ENCODE measurements at regions of chr5 and their contacts with region 1.

Region 1: GRCh38 chr5:137743031-137743640 is 7.2 kb upstream of the KLHL3 start:
- DNase-seq: no peak
- H3K4me3 ChIP-seq: no peak overlapping the region
- H3K27me3 ChIP-seq: no peaks in the 10 kb centered on the region
- CTCF ChIP-seq: peak; percentile 67

Region 2: GRCh38 chr5:137619191-137619870 is 123.8 kb before region 1 on chr5:
- CTCF ChIA-PET with region 1: interaction called, 13 read pairs
- POLR2A ChIA-PET with region 1: interaction called, 7 read pairs
- DNase-seq: peak; percentile 78
- H3K4me3 ChIP-seq: no peak overlapping the region
- H3K27me3 ChIP-seq: no peaks in the 10 kb centered on the region
- CTCF ChIP-seq: no peak

Region 3: GRCh38 chr5:137635521-137635921 is 107.6 kb before region 1 on chr5:
- CTCF ChIA-PET with region 1: interaction called, 141 read pairs
- POLR2A ChIA-PET with region 1: no interaction called
- DNase-seq: no peak
- H3K4me3 ChIP-seq: no peak overlapping the region
- H3K27me3 ChIP-seq: no peaks in the 10 kb centered on the region
- CTCF ChIP-seq: no peak

Region 4: DNA sequence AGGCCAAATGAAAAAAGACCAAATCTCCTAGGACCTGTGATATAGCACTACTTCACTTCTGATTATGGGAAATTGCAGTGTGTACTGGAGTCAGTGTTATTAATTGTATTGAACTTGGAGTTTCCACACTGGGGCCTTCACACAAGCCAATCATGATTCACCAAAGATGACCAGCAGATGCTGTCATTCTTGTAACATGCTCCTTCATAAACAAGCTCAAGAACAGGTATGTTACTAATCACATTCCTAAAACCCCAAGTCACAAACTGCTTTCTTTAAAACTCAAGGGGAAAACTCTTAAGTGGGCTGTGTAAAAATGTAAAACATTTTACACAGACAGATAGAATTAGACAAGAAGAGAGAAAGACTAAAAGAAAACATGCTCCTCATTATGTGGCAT is 12.8 kb before region 1 on chr5:
- CTCF ChIA-PET with region 1: interaction called, 10 read pairs
- POLR2A ChIA-PET with region 1: no interaction called
- DNase-seq: no peak
- H3K4me3 ChIP-seq: no peak overlapping the region
- H3K27me3 ChIP-seq: no peaks in the 10 kb centered on the region
- CTCF ChIP-seq: no peak

Region 5: GRCh38 chr5:137754126-137754960 is 11.2 kb after region 1 on chr5 and contains the start of gene HNRNPA0:
- CTCF ChIA-PET with region 1: interaction called, 19 read pairs
- POLR2A ChIA-PET with region 1: no interaction called
- DNase-seq: peak; percentile 75
- H3K4me3 ChIP-seq: peak within 1 kb of the TSS; percentile 71
- H3K27me3 ChIP-seq: no peaks in the 10 kb centered on the region
- CTCF ChIP-seq: 0 out of 2 replicates have a peak, but pooled peaks have one; percentile 5
- polyA plus RNA-seq, gene HNRNPA0: 10.2 and 10.3 TPM in 2 replicates

Region 6: DNA sequence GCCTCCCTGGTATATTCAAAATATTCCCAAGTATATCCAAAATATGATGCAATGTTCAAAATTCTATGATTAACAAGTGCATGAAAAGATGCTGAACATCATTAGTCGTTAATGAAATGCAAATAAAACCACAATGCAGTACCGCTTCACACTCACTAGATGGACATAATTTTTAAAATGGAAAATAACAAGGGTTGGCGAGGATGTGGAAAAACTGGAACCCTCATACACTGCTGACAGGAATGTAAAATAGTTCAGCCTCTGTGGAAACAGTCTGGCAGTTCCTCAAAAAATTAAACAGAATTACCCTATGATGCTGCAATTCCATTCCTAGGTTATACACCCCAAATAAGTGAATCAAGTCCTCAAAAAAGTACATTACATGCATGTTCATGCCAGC is 88.4 kb after region 1 on chr5:
- CTCF ChIA-PET with region 1: no interaction called
- POLR2A ChIA-PET with region 1: no interaction called
- DNase-seq: no peak
- H3K4me3 ChIP-seq: no peak overlapping the region
- H3K27me3 ChIP-seq: no peaks in the 10 kb centered on the region
- CTCF ChIP-seq: no peak

Measured in BJ (cell line).